HepG2 (cell line): ENCODE measurements at regions of chr14 and their contacts with region 1.

Region 1: GRCh38 chr14:94001501-94002396 is 4.6 kb downstream of the CCDC197 start:
- DNase-seq: peak; percentile 56
- ATAC-seq: peak; percentile 68
- H3K4me3 ChIP-seq: peak overlapping the region in 1 of 3 experiments; percentile 54; a peak in 1 of 6 replicates
- H3K27ac ChIP-seq: no peak overlapping the region
- H3K4me1 ChIP-seq: peaks cover 74% of the 10 kb centered on the region
- H3K27me3 ChIP-seq: peaks cover 0 to 17% of the 10 kb centered on the region in 2 experiments; a peak in 4 of 5 replicates
- CTCF ChIP-seq: peak; percentile 95
- EP300 ChIP-seq: no peak
- POLR2A ChIP-seq: no peak
- RAD21 ChIP-seq: peak; percentile 74

Region 2: DNA sequence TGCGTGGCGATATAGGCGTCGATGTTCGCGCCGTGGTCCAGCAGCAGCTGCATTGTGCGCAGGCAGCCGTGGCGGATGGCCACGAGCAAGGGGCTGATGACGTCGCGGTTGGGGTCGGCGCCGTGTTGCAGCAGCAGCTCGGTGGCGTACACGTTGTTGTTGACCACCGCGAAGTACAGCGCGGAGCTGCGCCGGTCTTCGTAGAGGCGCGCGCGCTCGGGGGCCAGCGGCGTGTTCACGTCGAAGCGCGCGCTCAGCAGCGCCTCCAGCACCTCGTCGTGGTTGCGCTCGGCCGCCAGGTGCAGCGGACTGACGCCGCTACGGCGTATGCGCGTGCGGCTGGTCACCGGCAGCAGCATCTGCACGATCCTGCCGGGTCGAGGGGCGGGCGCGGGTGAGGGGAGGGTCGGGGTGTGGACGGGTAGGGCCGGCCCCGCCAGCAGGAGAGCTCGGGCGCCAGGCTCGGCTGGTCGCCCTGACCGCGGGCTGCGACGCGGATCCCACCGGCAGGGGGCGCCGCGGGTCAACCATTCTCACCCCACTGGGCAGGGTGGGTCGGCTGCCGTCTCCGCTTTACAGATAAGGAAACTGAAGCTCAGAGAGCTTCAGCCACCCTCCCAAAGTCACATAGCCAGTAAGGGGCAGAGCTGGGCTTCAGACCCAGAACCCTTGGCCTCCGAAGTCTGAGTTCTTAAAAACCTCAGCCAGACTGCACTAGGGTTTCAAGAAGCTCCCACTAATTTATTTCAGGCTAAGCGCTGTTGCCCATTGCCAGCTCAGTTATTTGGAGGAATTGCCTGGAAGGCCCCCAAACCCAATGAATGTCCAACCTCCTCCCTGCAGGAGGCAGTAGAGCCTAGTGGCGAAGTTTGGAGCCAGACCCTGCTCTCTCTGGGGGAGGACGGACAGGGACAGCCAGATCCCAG is 62.2 kb before region 1 on chr14:
- CTCF ChIA-PET with region 1: interaction called, 17 read pairs
- POLR2A ChIA-PET with region 1: interaction called, 5 read pairs
- in situ Hi-C with region 1: loop called (anchors 5 kb)
- intact Hi-C with region 1: loop called (anchors 1 kb)
- DNase-seq: no peak
- ATAC-seq: peak; percentile 91
- H3K4me3 ChIP-seq: no peak overlapping the region
- H3K27ac ChIP-seq: no peak overlapping the region
- H3K4me1 ChIP-seq: peaks cover 25% of the 10 kb centered on the region
- H3K27me3 ChIP-seq: no peaks in the 10 kb centered on the region; a peak in 1 of 5 replicates
- CTCF ChIP-seq: peak; percentile 92
- EP300 ChIP-seq: no peak
- POLR2A ChIP-seq: no peak
- RAD21 ChIP-seq: peak; percentile 97

Region 3: GRCh38 chr14:93946104-93946503 is 55.6 kb before region 1 on chr14:
- CTCF ChIA-PET with region 1: no interaction called
- POLR2A ChIA-PET with region 1: interaction called, 5 read pairs
- in situ Hi-C with region 1: loop called (anchors 5 kb)
- intact Hi-C with region 1: loop called (anchors 1 kb)
- DNase-seq: no peak
- ATAC-seq: peak; percentile 40; the same call in 2 of the 3 replicates
- H3K4me3 ChIP-seq: no peak overlapping the region
- H3K27ac ChIP-seq: no peak overlapping the region
- H3K4me1 ChIP-seq: peaks cover 54% of the 10 kb centered on the region
- H3K27me3 ChIP-seq: no peaks in the 10 kb centered on the region; a peak in 2 of 5 replicates
- CTCF ChIP-seq: no peak
- EP300 ChIP-seq: no peak
- POLR2A ChIP-seq: no peak
- RAD21 ChIP-seq: no peak

Region 4: DNA sequence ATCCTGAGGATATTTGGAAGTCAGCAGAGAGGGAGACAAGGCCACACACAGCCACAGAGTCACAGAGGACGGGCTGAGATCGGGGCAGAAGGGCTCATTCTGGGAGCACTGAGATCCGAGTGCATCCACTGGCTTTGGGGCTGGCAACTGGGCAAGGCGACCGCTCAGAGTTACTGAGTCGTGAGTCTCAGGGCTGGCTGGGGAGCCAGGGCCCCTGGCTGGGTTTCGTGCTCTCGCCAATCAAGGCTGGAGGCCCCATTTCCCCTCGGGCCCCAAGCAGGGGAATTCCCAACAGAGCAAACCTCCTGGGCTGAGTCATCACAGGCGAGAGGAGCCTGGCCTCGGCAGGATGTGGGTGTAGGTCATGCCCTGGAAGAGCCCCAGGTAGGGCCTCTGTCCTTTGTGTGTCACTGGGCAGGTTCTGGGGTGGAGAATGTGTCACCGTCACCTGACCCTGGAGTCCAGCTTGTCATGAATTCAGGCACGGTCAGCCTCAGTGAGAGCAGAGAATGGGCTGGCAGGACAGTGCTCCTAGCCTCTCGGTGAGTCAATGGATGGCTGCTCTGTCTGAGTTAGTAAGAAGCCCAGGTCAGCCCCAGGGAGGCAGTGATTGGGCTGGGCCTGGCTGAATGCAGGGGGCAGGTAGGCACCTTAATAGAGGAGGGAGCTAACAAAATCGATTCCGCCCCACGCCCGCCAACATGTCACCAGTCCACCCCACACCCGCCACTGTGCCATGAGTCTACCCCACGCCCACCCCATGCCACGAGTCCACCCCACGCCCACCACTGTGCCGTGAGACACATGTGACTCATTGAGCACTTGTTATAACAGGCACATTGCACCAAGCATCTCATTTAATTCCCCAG is 42.3 kb before region 1 on chr14:
- CTCF ChIA-PET with region 1: no interaction called
- POLR2A ChIA-PET with region 1: interaction called, 15 read pairs
- in situ Hi-C with region 1: no loop called
- intact Hi-C with region 1: no loop called
- DNase-seq: peak; percentile 98
- ATAC-seq: peak; percentile 92
- H3K4me3 ChIP-seq: peak overlapping the region in 1 of 3 experiments; percentile 44; a peak in 2 of 6 replicates
- H3K27ac ChIP-seq: peak overlapping the region; percentile 79
- H3K4me1 ChIP-seq: peaks cover 86% of the 10 kb centered on the region
- H3K27me3 ChIP-seq: no peaks in the 10 kb centered on the region
- CTCF ChIP-seq: peak; percentile 26; the same call in 1 of the 2 replicates
- EP300 ChIP-seq: peak; percentile 83 to 97; a peak in 3 of 4 replicates
- POLR2A ChIP-seq: peak; percentile 60 to 82
- RAD21 ChIP-seq: peak; percentile 20; the same call in 1 of the 2 replicates

Region 5: DNA sequence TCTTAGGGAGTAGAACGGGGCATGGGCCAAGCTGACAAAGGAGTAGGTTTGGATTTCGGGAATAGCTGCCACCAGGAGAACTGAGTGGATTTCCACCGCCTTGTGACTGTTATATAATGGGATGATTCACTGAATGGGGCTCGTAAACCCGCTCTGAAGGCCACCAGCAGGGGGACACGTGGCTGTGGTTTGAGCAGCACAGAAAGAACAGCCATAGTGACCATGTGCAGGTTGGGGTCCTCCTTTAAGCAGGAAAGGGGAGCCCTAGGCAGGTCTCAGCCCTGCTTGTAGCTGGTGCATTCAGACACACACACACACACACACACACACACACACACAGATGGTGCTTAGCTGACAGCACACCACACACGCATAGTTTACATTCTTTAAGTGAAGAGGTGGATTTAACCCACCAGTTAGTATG is 16.8 kb before region 1 on chr14:
- CTCF ChIA-PET with region 1: interaction called, 12 read pairs
- POLR2A ChIA-PET with region 1: interaction called, 3 read pairs
- in situ Hi-C with region 1: no loop called
- intact Hi-C with region 1: loop called (anchors 1 kb)
- DNase-seq: peak; percentile 77
- ATAC-seq: peak; percentile 75
- H3K4me3 ChIP-seq: peak overlapping the region in 1 of 3 experiments; percentile 31; a peak in 1 of 6 replicates
- H3K27ac ChIP-seq: no peak overlapping the region
- H3K4me1 ChIP-seq: peaks cover 64% of the 10 kb centered on the region
- H3K27me3 ChIP-seq: peaks cover 0 to 16% of the 10 kb centered on the region in 2 experiments; a peak in 2 of 5 replicates
- CTCF ChIP-seq: peak; percentile 85
- EP300 ChIP-seq: no peak
- POLR2A ChIP-seq: no peak
- RAD21 ChIP-seq: peak; percentile 58; the same call in 1 of the 2 replicates

Region 6: DNA sequence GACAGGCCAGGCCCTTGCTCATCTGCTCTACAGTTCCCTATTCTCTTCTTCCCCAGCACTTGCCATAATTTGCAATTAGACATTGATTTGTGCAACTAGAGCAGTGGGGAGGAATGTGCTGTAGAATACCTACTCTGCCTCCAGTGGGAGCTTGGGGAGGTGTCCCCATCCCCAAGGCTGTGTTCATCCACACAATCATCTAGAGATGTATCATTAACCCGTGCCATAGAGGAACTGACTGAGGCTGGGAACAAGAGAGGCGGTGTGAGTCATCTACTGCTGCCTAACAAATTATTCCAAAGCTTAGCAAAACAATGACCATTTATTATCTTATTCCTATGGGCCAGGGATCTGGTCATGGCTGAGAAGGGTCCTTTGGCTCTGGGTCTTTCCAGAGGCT is 19.3 kb after region 1 on chr14:
- CTCF ChIA-PET with region 1: no interaction called
- POLR2A ChIA-PET with region 1: interaction called, 12 read pairs
- in situ Hi-C with region 1: no loop called
- intact Hi-C with region 1: no loop called
- DNase-seq: peak; percentile 55
- ATAC-seq: peak; percentile 57
- H3K4me3 ChIP-seq: peak overlapping the region in 1 of 3 experiments; percentile 66; a peak in 2 of 6 replicates
- H3K27ac ChIP-seq: no peak overlapping the region
- H3K4me1 ChIP-seq: peaks cover 55% of the 10 kb centered on the region
- H3K27me3 ChIP-seq: peaks cover 7 to 22% of the 10 kb centered on the region in 2 experiments; a peak in 4 of 5 replicates
- CTCF ChIP-seq: no peak
- EP300 ChIP-seq: no peak
- POLR2A ChIP-seq: no peak
- RAD21 ChIP-seq: no peak

Region 7: DNA sequence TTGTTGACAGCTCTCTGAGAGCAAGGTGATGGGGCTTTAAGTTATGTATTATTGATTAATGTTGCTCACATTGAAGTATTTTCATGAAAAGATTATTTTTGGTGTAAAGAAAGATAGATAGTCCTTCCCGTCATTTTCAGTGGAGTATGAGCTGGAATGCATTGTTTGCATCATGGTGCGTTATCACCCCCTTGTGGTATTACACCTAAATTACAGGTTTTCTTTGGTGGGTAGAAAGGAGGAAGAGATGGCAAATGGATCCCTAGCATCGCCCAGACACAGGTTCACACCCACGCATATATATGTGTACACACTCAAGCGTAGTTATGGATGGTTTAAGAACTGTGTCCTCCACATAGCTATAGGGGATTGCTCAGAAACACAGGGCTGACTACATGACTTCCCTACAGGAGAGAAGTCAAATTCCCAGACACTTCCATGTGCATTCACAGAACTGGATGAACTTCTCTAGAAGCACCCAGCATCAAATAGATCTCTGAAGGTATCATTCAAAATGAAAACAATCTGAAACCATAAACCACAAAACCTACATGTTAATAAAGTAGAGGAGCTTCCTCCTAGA is 305.8 kb after region 1 on chr14:
- CTCF ChIA-PET with region 1: no interaction called
- POLR2A ChIA-PET with region 1: no interaction called
- in situ Hi-C with region 1: no loop called
- intact Hi-C with region 1: no loop called
- DNase-seq: peak; percentile 50
- ATAC-seq: peak; percentile 65
- H3K4me3 ChIP-seq: no peak overlapping the region
- H3K27ac ChIP-seq: no peak overlapping the region
- H3K4me1 ChIP-seq: peaks cover 18% of the 10 kb centered on the region
- H3K27me3 ChIP-seq: no peaks in the 10 kb centered on the region
- CTCF ChIP-seq: peak; percentile 88
- EP300 ChIP-seq: no peak
- POLR2A ChIP-seq: no peak
- RAD21 ChIP-seq: peak; percentile 80